Mammary epithelial cell (primary cell): ENCODE measurements at regions of chr19 and their contacts with region 1.

Region 1: GRCh38 chr19:10695401-10696398 is 5.5 kb upstream of the QTRT1 start:
- DNase-seq: peak; percentile 93
- H3K4me3 ChIP-seq: no peak overlapping the region
- H3K27ac ChIP-seq: no peak overlapping the region
- H3K4me1 ChIP-seq: no peaks in the 10 kb centered on the region
- H3K27me3 ChIP-seq: no peaks in the 10 kb centered on the region
- CTCF ChIP-seq: no peak

Region 2: GRCh38 chr19:10478903-10479384 is 216.8 kb before region 1 on chr19:
- CTCF ChIA-PET with region 1: no interaction called
- dilution Hi-C with region 1: no loop called
- in situ Hi-C with region 1: no loop called
- intact Hi-C with region 1: loop called (anchors 1 kb)
- DNase-seq: peak; percentile 82
- H3K4me3 ChIP-seq: peak overlapping the region in 2 of 3 experiments; percentile 27 to 35
- H3K27ac ChIP-seq: no peak overlapping the region
- H3K4me1 ChIP-seq: peaks cover 5% of the 10 kb centered on the region
- H3K27me3 ChIP-seq: no peaks in the 10 kb centered on the region
- CTCF ChIP-seq: peak in 1 of 2 donors; percentile 39

Region 3: DNA sequence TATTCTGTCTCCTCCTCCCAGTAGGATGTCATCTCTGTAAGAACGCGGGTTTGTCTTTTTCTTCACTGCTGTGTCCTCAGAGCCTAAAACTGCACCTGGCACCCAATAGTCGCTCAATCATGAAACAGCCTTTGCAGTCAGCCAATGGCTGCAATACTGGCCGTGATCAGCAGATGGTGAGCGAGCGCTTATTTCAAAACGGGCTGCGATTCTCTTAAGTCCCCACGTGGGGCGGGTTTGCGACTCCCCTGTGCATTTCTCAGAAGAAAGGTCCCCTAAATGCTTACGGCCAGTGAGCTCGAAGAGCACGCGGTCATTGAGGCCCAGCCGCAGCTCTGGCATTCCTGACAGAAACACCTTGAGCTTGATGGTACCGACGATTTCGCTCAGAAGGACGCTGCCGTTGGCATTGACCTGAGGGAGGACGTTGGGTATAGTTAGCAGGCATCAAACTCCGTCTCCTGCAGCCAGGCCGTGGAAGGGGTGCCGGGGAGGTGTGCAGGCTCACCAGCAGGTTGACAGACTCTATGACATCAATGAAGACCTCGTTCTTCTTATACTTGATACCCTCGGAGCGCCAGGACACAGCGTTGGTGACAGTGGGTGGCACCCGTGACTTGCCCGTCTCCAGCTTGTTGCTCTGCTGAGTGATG is 114.6 kb before region 1 on chr19:
- CTCF ChIA-PET with region 1: interaction called, 8 read pairs
- dilution Hi-C with region 1: no loop called
- in situ Hi-C with region 1: loop called in 1 of 2 experiments (anchors 5 kb)
- intact Hi-C with region 1: loop called (anchors 1 kb)
- DNase-seq: peak; percentile 73
- H3K4me3 ChIP-seq: no peak overlapping the region
- H3K27ac ChIP-seq: no peak overlapping the region
- H3K4me1 ChIP-seq: no peaks in the 10 kb centered on the region
- H3K27me3 ChIP-seq: no peaks in the 10 kb centered on the region
- CTCF ChIP-seq: peak; percentile 98 to 99

Region 4: DNA sequence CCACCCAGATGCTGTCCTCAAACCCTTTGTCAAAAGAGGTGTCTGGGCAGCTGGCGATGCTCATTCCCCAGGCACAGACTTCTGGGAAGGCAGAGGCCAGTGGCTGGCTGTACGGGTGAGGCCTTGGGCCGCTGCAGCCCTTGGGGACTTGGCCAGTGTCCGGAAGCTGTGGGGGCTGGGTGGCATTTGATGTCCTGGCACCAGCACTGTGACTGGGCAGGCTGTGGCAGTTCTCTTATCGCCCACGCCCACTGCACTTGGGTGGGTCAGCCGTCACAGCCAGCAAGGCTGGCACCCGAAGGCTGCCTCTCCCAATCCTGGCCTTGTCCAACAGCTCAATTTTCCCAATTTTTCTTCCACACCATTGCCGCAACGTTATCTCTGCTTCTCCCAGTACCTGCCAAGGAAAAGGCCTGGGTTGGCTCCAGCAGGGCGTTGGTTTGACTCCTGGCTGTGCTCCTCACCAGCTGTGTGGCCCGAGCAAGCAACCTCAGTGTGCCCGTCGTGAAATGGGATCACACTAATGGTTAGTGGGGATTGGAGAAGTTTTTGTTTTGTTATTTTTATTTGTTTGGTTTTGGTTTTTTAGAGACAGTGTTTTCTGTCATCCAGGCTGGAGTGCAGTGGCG is 83.1 kb before region 1 on chr19:
- CTCF ChIA-PET with region 1: no interaction called
- dilution Hi-C with region 1: no loop called
- in situ Hi-C with region 1: no loop called
- intact Hi-C with region 1: no loop called
- DNase-seq: no peak
- H3K4me3 ChIP-seq: no peak overlapping the region
- H3K27ac ChIP-seq: no peak overlapping the region
- H3K4me1 ChIP-seq: peaks cover 12% of the 10 kb centered on the region
- H3K27me3 ChIP-seq: no peaks in the 10 kb centered on the region
- CTCF ChIP-seq: no peak

Region 5: DNA sequence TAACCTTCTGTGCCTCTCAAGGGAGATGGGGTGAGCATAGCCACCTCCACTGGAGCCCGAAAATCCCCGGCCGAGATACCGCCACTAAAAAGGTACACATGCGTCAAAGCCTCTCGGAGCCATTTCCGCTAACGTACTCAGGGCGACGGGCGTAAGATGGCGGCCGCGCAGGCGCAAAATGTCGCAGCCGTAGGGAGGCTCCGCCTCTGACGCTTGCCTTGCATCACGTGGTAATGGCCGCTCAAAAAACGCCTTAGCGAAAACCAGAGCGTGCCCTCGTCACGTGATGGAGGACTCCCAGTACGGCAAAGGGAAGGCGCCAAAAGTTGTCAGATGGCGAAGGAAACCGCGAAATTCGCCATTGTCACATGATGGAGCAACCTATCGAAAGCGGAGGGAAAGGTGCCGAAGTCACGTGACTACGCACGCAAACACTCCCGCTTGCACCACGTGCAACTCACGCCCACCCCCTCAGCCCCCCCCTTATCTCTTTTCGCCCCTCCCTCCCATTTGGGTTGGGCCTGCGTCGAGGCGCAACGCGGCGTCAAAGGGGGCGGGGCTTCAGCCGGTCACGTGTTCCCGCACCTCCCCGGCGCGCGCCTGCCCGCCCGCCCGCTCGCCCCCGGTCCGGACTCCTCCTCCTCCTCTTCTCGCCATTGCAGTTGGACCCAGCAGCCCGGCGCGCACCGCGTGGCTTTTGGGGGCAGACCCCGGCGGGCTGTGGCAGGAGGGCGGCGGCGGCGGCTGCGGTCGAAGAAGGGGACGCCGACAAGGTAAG is 41.8 kb before region 1 on chr19 and contains the start of gene ILF3:
- CTCF ChIA-PET with region 1: no interaction called
- dilution Hi-C with region 1: loop called (anchors 5 kb)
- in situ Hi-C with region 1: no loop called
- intact Hi-C with region 1: loop called (anchors 1 kb)
- DNase-seq: peak; percentile 100
- H3K4me3 ChIP-seq: peak within 1 kb of the TSS; percentile 87 to 99 (median 98)
- H3K27ac ChIP-seq: peak within 1 kb of the TSS; percentile 97
- H3K4me1 ChIP-seq: peaks cover 8% of the 10 kb centered on the region
- H3K27me3 ChIP-seq: no peaks in the 10 kb centered on the region
- CTCF ChIP-seq: no peak
- total RNA-seq, gene ILF3: 75.5 to 252 TPM

Region 6: DNA sequence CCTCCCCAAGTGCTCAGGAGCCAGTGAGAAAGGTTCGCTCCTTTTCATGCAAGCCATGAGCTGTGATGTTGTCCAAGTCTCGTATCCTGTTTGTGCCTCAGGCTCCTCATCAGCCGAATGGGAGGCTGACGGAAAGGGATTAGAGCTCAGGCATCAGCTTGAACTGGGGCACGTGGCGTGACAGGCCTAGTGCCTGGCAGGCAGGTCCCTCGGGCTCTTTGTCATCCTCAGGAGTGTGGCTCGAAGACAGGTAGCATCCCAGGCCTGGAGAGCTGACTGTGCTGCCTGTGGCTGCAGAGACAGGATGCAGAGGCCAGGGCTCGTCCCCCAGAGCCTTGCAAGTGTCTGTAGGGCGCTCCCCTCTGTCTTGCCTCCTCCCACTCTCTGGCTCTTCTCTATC is 60.7 kb after region 1 on chr19:
- CTCF ChIA-PET with region 1: no interaction called
- dilution Hi-C with region 1: loop called (anchors 5 kb)
- in situ Hi-C with region 1: no loop called
- intact Hi-C with region 1: no loop called
- DNase-seq: no peak
- H3K4me3 ChIP-seq: no peak overlapping the region
- H3K27ac ChIP-seq: no peak overlapping the region
- H3K4me1 ChIP-seq: no peaks in the 10 kb centered on the region
- H3K27me3 ChIP-seq: no peaks in the 10 kb centered on the region
- CTCF ChIP-seq: no peak

Region 7: DNA sequence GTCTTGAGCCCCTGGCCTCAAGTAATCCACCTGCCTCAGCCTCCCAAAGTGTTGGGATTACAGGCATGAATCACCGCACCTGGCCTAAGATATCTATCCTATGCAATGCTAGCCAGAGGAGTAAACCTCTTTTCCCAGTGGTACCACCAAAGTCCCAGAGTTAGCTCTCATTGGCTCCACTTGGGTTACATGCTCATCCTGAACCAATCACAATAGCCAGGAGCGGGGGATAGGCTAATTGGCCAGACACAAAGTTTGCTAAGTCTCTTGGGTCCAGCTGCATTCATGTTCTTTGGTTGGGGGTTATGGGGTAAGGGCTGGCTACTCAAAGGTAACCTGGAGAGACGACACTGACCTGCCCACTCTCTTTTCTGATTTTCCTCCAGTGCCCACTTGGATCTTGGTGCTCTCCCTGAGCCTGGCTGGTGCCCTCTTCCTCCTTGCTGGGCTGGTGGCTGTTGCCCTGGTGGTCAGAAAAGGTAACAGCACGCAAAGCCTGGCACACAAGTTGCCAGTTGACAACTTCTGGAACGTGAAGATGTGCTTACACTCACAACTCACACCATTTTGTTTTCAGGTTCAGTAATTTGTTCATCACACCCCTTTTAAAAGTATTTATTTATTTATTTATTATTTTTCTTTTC is 160.3 kb after region 1 on chr19:
- CTCF ChIA-PET with region 1: no interaction called
- dilution Hi-C with region 1: no loop called
- in situ Hi-C with region 1: no loop called
- intact Hi-C with region 1: no loop called
- DNase-seq: no peak
- H3K4me3 ChIP-seq: no peak overlapping the region
- H3K27ac ChIP-seq: no peak overlapping the region
- H3K4me1 ChIP-seq: no peaks in the 10 kb centered on the region
- H3K27me3 ChIP-seq: no peaks in the 10 kb centered on the region
- CTCF ChIP-seq: peak; percentile 59 to 63